ENCODE measurements at regions of chr7 and their contacts with region 1.

Region 1: GRCh38 chr7:106009403-106010226 is 46.6 kb downstream of the CDHR3 start:
- DNase-seq: peak; percentile 72
- H3K4me3 Mint-ChIP-seq: no peak overlapping the region
- H3K27ac Mint-ChIP-seq: peak overlapping the region; percentile 32
- H3K4me1 Mint-ChIP-seq: peaks cover 15% of the 10 kb centered on the region
- H3K27me3 Mint-ChIP-seq: peaks cover 33% of the 10 kb centered on the region

Region 2: DNA sequence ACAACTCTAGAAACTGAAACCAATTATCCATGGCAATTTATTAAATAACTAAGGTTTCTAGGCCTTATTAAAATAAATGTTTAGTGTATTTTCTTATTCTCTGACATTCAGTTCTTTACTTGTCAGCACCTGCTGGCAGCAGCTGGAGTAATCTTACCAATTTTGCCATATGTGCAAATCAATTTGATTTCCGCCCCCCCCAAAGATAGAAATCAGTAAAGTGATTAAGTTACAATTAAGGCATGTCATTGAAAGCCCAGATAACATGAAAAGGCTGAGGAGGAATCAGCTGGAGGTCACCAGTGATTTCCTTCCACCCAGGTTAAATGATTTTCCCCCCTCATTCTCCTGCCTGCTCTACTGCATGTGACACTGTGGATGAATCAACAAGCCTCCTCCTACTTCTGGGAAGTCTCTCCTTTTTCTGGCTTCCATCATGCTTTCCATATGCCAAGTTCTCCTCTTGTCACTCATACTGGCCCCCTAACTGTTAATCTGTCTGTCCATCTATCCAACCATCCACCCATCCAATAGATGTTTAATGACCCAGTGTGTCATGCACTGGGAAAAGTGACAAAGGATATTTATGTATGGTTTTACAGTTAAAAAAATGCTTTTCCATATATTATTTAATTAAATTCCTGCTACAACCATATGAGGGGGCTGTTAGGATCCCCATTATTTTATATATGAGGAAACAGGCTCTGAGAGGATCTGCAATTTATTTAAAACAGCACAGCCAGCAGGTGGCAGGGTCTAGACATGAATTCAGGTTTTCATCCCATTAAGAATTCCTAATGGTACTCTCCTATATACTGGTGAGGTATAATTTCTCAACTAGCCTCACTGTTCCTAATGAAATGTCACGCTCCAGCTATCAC is 249.7 kb before region 1 on chr7:
- intact Hi-C with region 1: loop called (anchors 1 kb)
- DNase-seq: no peak
- H3K4me3 Mint-ChIP-seq: no peak overlapping the region
- H3K27ac Mint-ChIP-seq: no peak overlapping the region
- H3K4me1 Mint-ChIP-seq: peaks cover 26% of the 10 kb centered on the region
- H3K27me3 Mint-ChIP-seq: peaks cover 12% of the 10 kb centered on the region

Region 3: GRCh38 chr7:105766421-105767073 is 243.1 kb before region 1 on chr7:
- intact Hi-C with region 1: loop called (anchors 1 kb)
- DNase-seq: no peak
- H3K4me3 Mint-ChIP-seq: no peak overlapping the region
- H3K27ac Mint-ChIP-seq: no peak overlapping the region
- H3K4me1 Mint-ChIP-seq: peaks cover 24% of the 10 kb centered on the region
- H3K27me3 Mint-ChIP-seq: peaks cover 22% of the 10 kb centered on the region

Region 4: GRCh38 chr7:105924945-105925344 is 84.7 kb before region 1 on chr7:
- intact Hi-C with region 1: loop called (anchors 5 kb)
- DNase-seq: no peak
- H3K4me3 Mint-ChIP-seq: no peak overlapping the region
- H3K27ac Mint-ChIP-seq: peak overlapping the region; percentile 56
- H3K4me1 Mint-ChIP-seq: peaks cover 18% of the 10 kb centered on the region
- H3K27me3 Mint-ChIP-seq: peaks cover 12% of the 10 kb centered on the region

Region 5: GRCh38 chr7:106022193-106022821 is 12.7 kb after region 1 on chr7:
- intact Hi-C with region 1: loop called (anchors 1 kb)
- DNase-seq: peak; percentile 56
- H3K4me3 Mint-ChIP-seq: peak overlapping the region; percentile 37
- H3K27ac Mint-ChIP-seq: peak overlapping the region; percentile 77
- H3K4me1 Mint-ChIP-seq: peaks cover 49% of the 10 kb centered on the region
- H3K27me3 Mint-ChIP-seq: peaks cover 13% of the 10 kb centered on the region

Region 6: DNA sequence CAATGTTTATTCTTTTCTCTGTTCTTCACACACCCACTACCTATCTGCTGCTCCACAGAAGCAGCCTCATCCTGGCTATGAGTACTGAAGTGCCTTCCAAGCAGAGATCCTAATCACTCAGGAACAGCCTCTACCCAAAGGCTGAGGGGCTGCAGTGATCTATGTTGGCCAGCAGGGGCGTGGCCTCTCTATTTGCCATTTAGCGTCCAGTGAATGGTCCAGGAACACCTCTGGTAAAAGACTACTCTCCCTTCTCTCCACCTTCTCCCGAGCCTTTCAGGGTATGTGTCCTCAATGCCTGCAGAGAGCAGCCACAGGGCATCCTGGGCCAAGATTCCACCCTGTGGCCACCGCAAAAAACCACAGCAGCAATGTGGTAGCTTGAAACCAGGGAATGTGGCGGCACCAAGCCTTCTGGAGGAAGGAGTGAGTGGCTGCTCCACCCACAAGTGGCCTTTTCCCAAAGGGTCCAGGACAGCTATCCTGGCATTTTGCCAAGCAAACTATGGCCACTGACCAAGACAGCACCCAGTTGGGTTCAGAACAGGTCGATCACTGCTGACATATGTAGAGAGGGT is 31.6 kb after region 1 on chr7:
- intact Hi-C with region 1: loop called (anchors 1 kb)
- DNase-seq: no peak
- H3K4me3 Mint-ChIP-seq: no peak overlapping the region
- H3K27ac Mint-ChIP-seq: no peak overlapping the region
- H3K4me1 Mint-ChIP-seq: peaks cover 15% of the 10 kb centered on the region
- H3K27me3 Mint-ChIP-seq: peaks cover 20% of the 10 kb centered on the region